ENCODE measurements at regions of chr2 and their contacts with region 1.

Region 1: DNA sequence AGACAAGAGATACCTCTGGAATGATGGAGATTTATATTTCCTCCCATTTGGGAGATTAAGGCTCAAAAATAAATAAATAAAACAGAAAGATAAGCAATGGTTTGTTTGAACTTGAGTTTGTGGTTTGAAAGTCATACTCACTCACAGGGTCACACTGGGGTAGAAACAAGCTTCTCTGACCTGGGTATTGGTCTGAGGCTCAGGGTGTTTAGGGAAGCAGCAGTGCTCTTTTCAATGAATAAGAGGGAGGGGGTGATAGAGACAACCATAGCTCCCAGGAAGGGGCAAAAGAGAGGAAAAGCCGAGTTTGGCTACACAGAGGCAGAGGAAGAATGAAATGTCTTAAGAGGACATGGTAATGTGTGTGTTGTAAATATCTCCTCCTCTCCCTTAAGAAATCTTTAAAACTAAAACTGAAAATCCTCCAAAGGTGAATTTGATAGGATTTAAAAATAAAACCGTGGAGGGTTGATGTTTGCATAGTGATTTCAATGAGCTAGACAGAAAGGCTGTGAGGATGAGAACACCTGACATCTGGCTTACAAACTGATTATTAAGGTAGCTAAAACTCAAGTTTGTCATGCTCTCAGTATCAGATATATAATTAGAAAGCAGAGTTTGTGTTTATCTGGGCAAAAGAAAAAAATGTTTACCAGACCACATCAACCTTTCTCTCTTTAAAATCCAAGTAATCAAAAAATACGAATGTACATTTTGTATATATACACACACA is 159.9 kb upstream of the TMEFF2 start:
- DNase-seq: no peak
- ATAC-seq: no peak
- H3K4me3 ChIP-seq: no peak overlapping the region
- H3K4me3 Mint-ChIP-seq: no peak overlapping the region
- H3K27ac ChIP-seq: no peak overlapping the region
- H3K27ac Mint-ChIP-seq: no peak overlapping the region
- H3K4me1 ChIP-seq: no peaks in the 10 kb centered on the region
- H3K4me1 Mint-ChIP-seq: no peaks in the 10 kb centered on the region
- H3K27me3 ChIP-seq: no peaks in the 10 kb centered on the region
- H3K27me3 Mint-ChIP-seq: no peaks in the 10 kb centered on the region

Region 2: GRCh38 chr2:192377173-192377572 is 22.5 kb after region 1 on chr2:
- CTCF ChIA-PET with region 1: interaction called in 1 of 2 experiments, 10 read pairs
- POLR2A ChIA-PET with region 1: no interaction called
- DNase-seq: no peak
- ATAC-seq: no peak
- H3K4me3 ChIP-seq: no peak overlapping the region
- H3K4me3 Mint-ChIP-seq: no peak overlapping the region
- H3K27ac ChIP-seq: no peak overlapping the region
- H3K27ac Mint-ChIP-seq: no peak overlapping the region
- H3K4me1 ChIP-seq: no peaks in the 10 kb centered on the region
- H3K4me1 Mint-ChIP-seq: no peaks in the 10 kb centered on the region
- H3K27me3 ChIP-seq: no peaks in the 10 kb centered on the region
- H3K27me3 Mint-ChIP-seq: no peaks in the 10 kb centered on the region